IMR-90 (cell line): ENCODE measurements at regions of chr19 and their contacts with region 1.

Region 1: DNA sequence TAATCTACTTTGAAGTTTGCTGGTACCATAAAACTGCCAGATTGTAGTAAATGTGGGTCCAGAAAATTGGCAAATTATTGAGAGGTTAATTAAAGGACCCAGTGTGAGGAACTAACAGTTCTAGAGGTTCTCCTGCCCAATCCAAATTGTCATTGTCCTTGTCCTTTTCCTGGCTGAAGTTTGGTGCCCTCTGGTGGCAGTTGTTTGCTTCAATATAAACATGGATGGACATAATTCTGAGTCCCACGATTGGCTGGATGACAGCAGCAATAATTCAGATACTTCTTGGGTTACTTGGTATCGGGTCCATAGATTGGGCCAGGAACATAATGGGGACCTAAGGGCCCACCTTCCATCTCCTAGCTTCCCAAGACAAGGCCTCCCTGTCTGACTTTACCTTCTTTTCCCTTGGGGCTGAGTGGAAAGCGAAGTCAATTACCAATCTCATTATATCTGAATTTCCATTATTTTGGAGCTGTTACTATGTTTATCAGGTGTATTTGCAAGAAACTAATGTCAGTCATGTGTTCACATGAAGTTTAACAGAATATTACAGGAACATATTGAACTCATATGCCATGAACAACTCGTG is 33.8 kb upstream of the GARRE1 start:
- DNase-seq: peak; percentile 53
- ATAC-seq: no peak
- H3K4me3 ChIP-seq: no peak overlapping the region
- H3K27ac ChIP-seq: no peak overlapping the region
- H3K4me1 ChIP-seq: peaks cover 17% of the 10 kb centered on the region
- H3K27me3 ChIP-seq: no peaks in the 10 kb centered on the region
- CTCF ChIP-seq: peak; percentile 64
- POLR2A ChIP-seq: no peak
- RAD21 ChIP-seq: peak; percentile 56

Region 2: DNA sequence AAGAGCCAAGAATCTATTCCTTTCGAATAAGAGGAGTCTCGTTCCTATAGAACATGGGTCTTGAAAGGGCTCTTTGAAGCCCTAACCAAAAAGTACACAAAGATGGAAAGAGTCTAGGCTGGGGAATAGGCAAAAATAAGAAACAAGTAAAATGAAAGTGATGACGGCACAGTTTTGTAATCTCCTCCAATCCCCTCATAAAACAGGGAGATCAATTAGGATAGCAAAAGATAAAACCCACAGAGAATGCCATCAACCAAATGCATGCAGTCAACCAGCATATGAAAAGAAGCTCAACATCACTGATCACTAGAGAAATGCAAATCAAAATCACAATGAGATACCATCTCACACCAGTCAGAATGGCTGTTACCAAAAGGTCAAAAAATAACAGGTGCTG is 170.6 kb before region 1 on chr19:
- CTCF ChIA-PET with region 1: no interaction called
- POLR2A ChIA-PET with region 1: no interaction called
- dilution Hi-C with region 1: no loop called
- in situ Hi-C with region 1: no loop called
- intact Hi-C with region 1: no loop called
- DNase-seq: no peak
- ATAC-seq: no peak
- H3K4me3 ChIP-seq: no peak overlapping the region
- H3K27ac ChIP-seq: no peak overlapping the region
- H3K4me1 ChIP-seq: no peaks in the 10 kb centered on the region
- H3K27me3 ChIP-seq: no peaks in the 10 kb centered on the region; the same call in 1 of the 2 replicates
- CTCF ChIP-seq: no peak
- POLR2A ChIP-seq: no peak
- RAD21 ChIP-seq: no peak

Region 3: DNA sequence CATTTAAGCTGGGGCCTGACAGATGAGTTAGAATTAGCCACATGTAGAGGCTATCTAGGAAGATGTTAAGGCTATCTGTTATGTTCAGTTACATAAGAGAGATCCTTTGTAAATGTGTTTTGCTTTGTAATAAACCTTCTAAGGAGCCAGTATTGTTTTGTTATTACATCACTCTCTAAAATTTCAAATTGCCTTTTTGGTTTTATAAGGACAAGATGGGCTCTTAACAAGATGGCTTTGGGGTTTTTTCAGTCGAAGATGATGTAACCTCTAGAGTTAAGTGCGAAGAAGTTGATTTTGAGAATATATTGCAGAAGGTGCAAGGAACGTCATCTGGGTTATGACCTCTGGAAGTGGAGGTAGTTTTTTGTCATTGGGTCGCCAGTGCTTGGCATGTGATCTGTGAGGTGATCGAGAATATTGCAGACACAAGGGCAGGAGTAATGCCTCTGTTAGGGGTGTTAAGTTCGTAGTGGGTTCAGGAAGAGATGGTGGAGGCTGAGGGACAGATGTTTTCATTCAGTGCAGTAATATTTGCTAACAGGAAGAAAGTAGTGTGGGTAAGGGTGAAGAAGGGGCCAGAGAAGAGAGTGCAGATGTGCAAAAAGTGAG is 35.6 kb before region 1 on chr19:
- CTCF ChIA-PET with region 1: no interaction called
- POLR2A ChIA-PET with region 1: no interaction called
- dilution Hi-C with region 1: no loop called
- in situ Hi-C with region 1: no loop called
- intact Hi-C with region 1: loop called (anchors 5 kb)
- DNase-seq: no peak
- ATAC-seq: peak; percentile 34; the same call in 1 of the 2 replicates
- H3K4me3 ChIP-seq: no peak overlapping the region
- H3K27ac ChIP-seq: no peak overlapping the region
- H3K4me1 ChIP-seq: peaks cover 16% of the 10 kb centered on the region
- H3K27me3 ChIP-seq: no peaks in the 10 kb centered on the region
- CTCF ChIP-seq: no peak
- POLR2A ChIP-seq: no peak
- RAD21 ChIP-seq: no peak

Region 4: GRCh38 chr19:34244611-34245299 is 24.2 kb after region 1 on chr19:
- CTCF ChIA-PET with region 1: no interaction called
- POLR2A ChIA-PET with region 1: interaction called, 19 read pairs
- dilution Hi-C with region 1: no loop called
- in situ Hi-C with region 1: no loop called
- intact Hi-C with region 1: no loop called
- DNase-seq: peak; percentile 38
- ATAC-seq: peak; percentile 63
- H3K4me3 ChIP-seq: no peak overlapping the region
- H3K27ac ChIP-seq: no peak overlapping the region
- H3K4me1 ChIP-seq: peaks cover 2% of the 10 kb centered on the region; the same call in 1 of the 2 replicates
- H3K27me3 ChIP-seq: no peaks in the 10 kb centered on the region
- CTCF ChIP-seq: no peak
- POLR2A ChIP-seq: no peak
- RAD21 ChIP-seq: no peak

Region 5: GRCh38 chr19:34253699-34254551 is 33.4 kb after region 1 on chr19:
- CTCF ChIA-PET with region 1: no interaction called
- POLR2A ChIA-PET with region 1: no interaction called
- dilution Hi-C with region 1: no loop called
- in situ Hi-C with region 1: no loop called
- intact Hi-C with region 1: loop called (anchors 2 kb)
- DNase-seq: peak; percentile 47
- ATAC-seq: peak; percentile 21
- H3K4me3 ChIP-seq: peak overlapping the region; percentile 95
- H3K27ac ChIP-seq: peak overlapping the region; percentile 91
- H3K4me1 ChIP-seq: peaks cover 2% of the 10 kb centered on the region
- H3K27me3 ChIP-seq: no peaks in the 10 kb centered on the region
- CTCF ChIP-seq: no peak
- POLR2A ChIP-seq: peak; percentile 38
- RAD21 ChIP-seq: no peak

Region 6: GRCh38 chr19:34336781-34337271 is 116.3 kb after region 1 on chr19:
- CTCF ChIA-PET with region 1: interaction called, 3 read pairs
- POLR2A ChIA-PET with region 1: no interaction called
- dilution Hi-C with region 1: no loop called
- in situ Hi-C with region 1: no loop called
- intact Hi-C with region 1: loop called (anchors 5 kb)
- DNase-seq: peak; percentile 47
- ATAC-seq: peak; percentile 64
- H3K4me3 ChIP-seq: no peak overlapping the region
- H3K27ac ChIP-seq: no peak overlapping the region
- H3K4me1 ChIP-seq: peaks cover 4% of the 10 kb centered on the region; the same call in 1 of the 2 replicates
- H3K27me3 ChIP-seq: no peaks in the 10 kb centered on the region
- CTCF ChIP-seq: peak; percentile 61
- POLR2A ChIP-seq: no peak
- RAD21 ChIP-seq: peak; percentile 53

Region 7: DNA sequence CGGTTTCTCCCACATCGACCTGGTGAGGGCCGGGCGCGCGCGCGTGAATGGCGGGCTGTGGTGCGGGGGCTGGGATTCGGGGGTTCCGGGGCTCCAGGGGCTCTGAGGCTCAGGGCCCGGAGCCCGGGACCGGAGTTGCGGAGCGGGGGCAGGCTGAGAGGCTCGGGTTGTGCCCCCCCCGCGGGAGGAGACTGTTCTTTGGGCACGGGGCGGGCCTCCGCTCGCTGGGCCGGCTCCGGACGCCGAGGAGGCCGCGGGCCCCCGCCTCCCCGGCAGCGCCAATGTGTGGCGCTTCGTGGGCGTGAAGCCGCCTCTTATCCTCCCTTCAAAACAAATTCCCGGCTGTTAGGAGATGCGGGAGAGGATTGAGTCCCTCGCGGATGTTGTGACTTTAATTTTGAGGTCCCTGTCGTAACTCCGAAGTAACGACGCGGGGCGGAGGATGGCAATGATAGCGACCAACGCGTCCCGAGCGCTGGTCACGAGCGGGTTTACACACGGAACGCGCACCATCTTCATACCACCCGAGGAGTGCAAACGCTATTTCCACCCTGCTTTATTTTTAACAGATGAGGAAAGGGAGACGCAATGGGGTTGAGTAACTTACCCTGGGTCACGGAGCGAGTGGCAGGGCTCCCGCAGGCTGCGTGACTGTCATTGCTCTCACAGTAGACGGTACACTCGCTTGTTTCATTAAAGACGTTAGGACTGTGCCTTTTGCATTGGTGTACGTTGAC is 208.1 kb after region 1 on chr19:
- CTCF ChIA-PET with region 1: no interaction called
- POLR2A ChIA-PET with region 1: no interaction called
- dilution Hi-C with region 1: no loop called
- in situ Hi-C with region 1: no loop called
- intact Hi-C with region 1: loop called (anchors 10 kb)
- DNase-seq: peak; percentile 17
- ATAC-seq: peak; percentile 73
- H3K4me3 ChIP-seq: peak overlapping the region; percentile 99
- H3K27ac ChIP-seq: peak overlapping the region; percentile 84
- H3K4me1 ChIP-seq: peaks cover 18% of the 10 kb centered on the region
- H3K27me3 ChIP-seq: no peaks in the 10 kb centered on the region
- CTCF ChIP-seq: no peak
- POLR2A ChIP-seq: no peak
- RAD21 ChIP-seq: no peak